ENCODE measurements at regions of chr16 and their contacts with region 1.

Region 1: GRCh38 chr16:3938848-3939624 is 58.5 kb upstream of the CREBBP start:
- DNase-seq: peak; percentile 88
- ATAC-seq: peak; percentile 96
- H3K4me3 Mint-ChIP-seq: no peak overlapping the region; the same call in 1 of the 2 replicates
- H3K27ac Mint-ChIP-seq: no peak overlapping the region
- H3K4me1 Mint-ChIP-seq: peaks cover 5% of the 10 kb centered on the region
- H3K27me3 Mint-ChIP-seq: 0 out of 2 replicates have a peak, but pooled peaks cover 2% of the 10 kb centered on the region
- CTCF ChIP-seq: peak; percentile 92

Region 2: DNA sequence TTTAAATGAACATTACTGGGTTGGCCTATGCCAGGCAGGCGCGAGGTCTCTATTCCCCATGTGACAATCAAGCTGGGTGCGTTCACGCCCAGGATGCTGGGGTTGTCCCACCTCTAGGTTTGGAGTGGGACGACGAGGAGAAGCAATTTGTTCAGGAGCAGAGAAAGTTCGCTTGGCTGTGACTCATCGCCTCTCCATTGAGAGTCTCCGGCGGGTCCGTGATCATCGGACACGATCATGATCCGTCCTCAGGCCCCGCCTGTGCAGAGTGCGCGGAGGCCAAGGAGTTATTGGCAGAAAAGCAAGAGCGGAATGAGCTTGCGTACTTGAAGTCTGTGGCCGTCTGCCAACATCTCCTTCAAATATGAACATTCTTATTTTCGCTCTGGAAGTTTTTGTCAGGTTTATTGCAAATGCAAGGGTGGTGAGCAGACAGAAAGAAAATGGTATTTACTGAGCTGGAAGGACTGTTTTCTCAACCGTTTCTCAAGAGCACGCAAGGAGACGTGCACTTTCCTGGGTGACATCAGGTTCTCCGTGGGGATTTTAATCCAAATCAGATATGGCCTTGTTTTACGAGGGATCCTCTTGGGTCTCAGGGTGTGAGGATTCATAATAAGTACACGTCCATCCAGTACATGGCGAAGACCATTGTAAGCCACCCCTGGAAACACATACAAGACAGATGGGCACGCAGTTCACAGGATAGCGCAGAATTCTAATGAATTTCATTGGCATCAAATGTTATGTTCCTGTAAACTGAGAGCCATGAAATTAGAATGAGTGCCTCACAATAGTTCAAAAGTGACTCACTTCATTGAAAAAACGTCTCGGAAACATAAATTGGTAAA is 11.5 kb after region 1 on chr16:
- CTCF ChIA-PET with region 1: interaction called, 21 read pairs
- POLR2A ChIA-PET with region 1: no interaction called
- DNase-seq: no peak
- ATAC-seq: no peak
- H3K4me3 Mint-ChIP-seq: no peak overlapping the region
- H3K27ac Mint-ChIP-seq: no peak overlapping the region
- H3K4me1 Mint-ChIP-seq: no peaks in the 10 kb centered on the region
- H3K27me3 Mint-ChIP-seq: no peaks in the 10 kb centered on the region
- CTCF ChIP-seq: no peak

Region 3: GRCh38 chr16:3963203-3963602 is 24.2 kb after region 1 on chr16:
- CTCF ChIA-PET with region 1: interaction called, 14 read pairs
- POLR2A ChIA-PET with region 1: no interaction called
- DNase-seq: no peak
- ATAC-seq: peak; percentile 47
- H3K4me3 Mint-ChIP-seq: no peak overlapping the region
- H3K27ac Mint-ChIP-seq: peak overlapping the region; percentile 73
- H3K4me1 Mint-ChIP-seq: peaks cover 14% of the 10 kb centered on the region
- H3K27me3 Mint-ChIP-seq: no peaks in the 10 kb centered on the region
- CTCF ChIP-seq: no peak

Region 4: GRCh38 chr16:3974751-3975150 is 35.7 kb after region 1 on chr16:
- CTCF ChIA-PET with region 1: interaction called, 13 read pairs
- POLR2A ChIA-PET with region 1: no interaction called
- DNase-seq: no peak
- ATAC-seq: no peak
- H3K4me3 Mint-ChIP-seq: no peak overlapping the region
- H3K27ac Mint-ChIP-seq: no peak overlapping the region
- H3K4me1 Mint-ChIP-seq: no peaks in the 10 kb centered on the region
- H3K27me3 Mint-ChIP-seq: no peaks in the 10 kb centered on the region
- CTCF ChIP-seq: no peak

Region 5: DNA sequence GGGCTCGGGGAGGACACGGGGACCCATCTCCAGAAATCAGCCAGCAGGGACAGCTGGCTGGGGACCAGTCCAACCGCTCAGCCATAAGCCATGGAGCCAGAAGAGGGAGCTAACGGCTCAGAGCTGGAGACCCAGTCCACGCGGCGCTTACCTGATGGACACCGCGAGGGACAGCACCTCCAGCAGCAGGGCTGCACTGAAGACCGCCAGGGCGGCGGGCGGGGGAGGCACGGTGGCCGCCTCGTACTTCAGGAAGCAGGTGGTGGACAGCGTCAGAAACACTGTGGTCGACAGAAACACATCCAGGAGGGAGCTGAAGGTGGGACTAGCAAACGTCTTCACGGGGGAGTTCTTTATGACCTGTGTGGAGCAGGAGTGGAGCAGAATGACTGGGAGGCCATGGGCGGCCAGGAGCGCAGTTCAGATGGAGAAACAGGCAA is 44.1 kb after region 1 on chr16:
- CTCF ChIA-PET with region 1: interaction called, 16 read pairs
- POLR2A ChIA-PET with region 1: no interaction called
- DNase-seq: peak; percentile 89
- ATAC-seq: peak; percentile 97
- H3K4me3 Mint-ChIP-seq: no peak overlapping the region
- H3K27ac Mint-ChIP-seq: no peak overlapping the region
- H3K4me1 Mint-ChIP-seq: peaks cover 8% of the 10 kb centered on the region
- H3K27me3 Mint-ChIP-seq: peaks cover 9% of the 10 kb centered on the region
- CTCF ChIP-seq: peak; percentile 38; the same call in 1 of the 2 replicates

Region 6: GRCh38 chr16:4160658-4161430 is 221.8 kb after region 1 on chr16:
- CTCF ChIA-PET with region 1: no interaction called
- POLR2A ChIA-PET with region 1: no interaction called
- DNase-seq: no peak
- ATAC-seq: no peak
- H3K4me3 Mint-ChIP-seq: no peak overlapping the region
- H3K27ac Mint-ChIP-seq: no peak overlapping the region
- H3K4me1 Mint-ChIP-seq: no peaks in the 10 kb centered on the region
- H3K27me3 Mint-ChIP-seq: no peaks in the 10 kb centered on the region
- CTCF ChIP-seq: no peak

Measured in WTC11 (cell line).